Activated naive CD8-positive, alpha-beta T cell treated with anti-CD3 and anti-CD28 coated beads, Interleukin-2, amount 10 ng/mL, durations not matched to agents 7 days and 5 days (primary cell): ENCODE measurements at regions of chr3 and their contacts with region 1.

Region 1: DNA sequence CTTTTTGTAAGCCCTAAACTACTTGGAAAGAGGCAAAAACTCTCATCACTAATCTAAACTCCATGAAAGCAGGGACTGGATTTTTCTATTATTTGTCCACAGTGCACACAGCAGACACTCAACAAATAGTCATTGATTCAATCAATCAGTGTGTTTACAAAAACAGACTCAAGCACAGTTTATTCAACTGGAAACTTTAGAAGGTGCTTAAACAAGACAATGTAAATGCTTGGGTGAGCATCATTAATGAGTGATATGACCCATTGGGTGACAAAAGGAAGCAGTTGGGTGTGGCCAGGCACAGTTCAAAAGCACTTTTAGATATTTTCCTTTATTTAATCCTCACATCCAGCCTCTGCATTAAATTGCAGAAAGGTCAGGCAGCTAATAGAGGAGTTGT is 32.0 kb upstream of the PPP4R2 start:
- DNase-seq: no peak
- ATAC-seq: no peak
- H3K4me3 Mint-ChIP-seq: no peak overlapping the region
- H3K27ac Mint-ChIP-seq: no peak overlapping the region
- H3K4me1 Mint-ChIP-seq: peaks cover 21% of the 10 kb centered on the region
- H3K27me3 Mint-ChIP-seq: peaks cover 2% of the 10 kb centered on the region

Region 2: DNA sequence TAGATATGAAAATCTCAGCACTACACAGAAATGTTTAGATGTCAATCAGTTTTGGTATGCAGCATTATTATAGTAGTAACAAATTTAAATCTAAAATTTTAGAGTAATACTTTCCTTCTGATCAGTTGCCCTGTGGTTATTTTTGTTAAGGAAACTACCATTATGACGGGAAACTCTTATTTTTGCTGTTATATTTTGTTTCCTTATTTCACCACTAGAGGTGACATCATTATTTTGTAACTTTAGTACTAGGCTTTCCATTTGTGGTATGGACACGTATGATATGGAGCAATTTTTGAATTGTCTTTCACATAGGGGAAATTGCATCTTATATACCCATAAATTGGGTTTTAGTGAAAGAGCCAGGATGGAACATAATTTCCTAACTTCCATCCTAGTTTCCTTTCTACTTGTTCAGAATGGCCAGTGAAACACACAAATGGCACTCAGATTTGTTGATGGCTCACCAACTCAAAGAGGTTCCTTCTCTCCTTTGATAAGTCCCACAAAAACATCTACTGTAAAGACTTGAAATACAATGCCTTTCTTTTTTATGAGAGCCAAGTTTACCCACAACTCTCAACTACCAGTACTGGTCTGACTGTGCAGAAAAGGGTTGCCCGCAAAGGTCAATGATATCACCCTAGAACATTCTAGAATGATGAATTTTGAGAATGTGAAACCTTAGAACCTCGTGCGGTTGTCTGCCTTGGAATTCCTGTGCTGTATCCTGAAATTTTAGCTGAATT is 12.6 kb after region 1 on chr3:
- POLR2A ChIA-PET with region 1: no interaction called
- DNase-seq: no peak
- ATAC-seq: no peak
- H3K4me3 Mint-ChIP-seq: no peak overlapping the region
- H3K27ac Mint-ChIP-seq: no peak overlapping the region
- H3K4me1 Mint-ChIP-seq: peaks cover 2% of the 10 kb centered on the region
- H3K27me3 Mint-ChIP-seq: peaks cover 30% of the 10 kb centered on the region

Region 3: DNA sequence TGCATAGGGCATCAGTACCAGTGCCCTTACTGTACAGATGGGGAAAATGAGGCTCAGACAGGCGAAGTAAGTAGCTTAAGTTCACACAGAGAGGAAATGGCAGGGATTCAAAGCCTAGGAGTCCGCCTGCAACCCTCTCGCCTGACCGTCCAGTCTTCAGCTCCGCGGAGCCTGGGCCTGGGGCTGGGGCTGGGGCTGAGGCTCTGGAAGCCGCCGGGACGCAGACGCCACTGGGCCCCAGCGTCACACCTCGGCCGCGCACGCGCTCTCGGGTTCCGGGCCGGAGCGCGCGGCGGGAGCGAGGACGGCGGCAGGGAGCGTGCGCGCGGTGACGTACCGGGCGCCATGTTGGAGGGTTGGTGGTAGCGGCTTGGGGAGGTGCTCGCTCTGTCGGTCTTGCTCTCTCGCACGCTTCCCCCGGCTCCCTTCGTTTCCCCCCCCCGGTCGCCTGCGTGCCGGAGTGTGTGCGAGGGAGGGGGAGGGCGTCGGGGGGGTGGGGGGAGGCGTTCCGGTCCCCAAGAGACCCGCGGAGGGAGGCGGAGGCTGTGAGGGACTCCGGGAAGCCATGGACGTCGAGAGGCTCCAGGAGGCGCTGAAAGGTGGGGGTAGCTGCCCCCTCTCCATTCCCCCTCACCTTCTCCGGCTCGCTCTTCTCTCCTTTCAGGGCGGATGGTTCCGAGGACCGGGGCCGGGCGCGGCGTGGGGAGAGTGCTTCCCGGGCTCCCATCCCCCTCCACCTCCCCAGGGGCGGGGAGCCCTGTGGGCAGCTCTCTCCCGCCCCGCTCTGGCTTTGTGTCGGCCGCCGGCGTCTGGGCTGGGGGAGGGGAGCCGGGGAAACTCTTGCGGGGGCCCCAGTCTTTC is 32.1 kb after region 1 on chr3 and contains the start of gene PPP4R2:
- POLR2A ChIA-PET with region 1: interaction called, 12 read pairs
- DNase-seq: peak; percentile 95
- ATAC-seq: peak; percentile 87
- H3K4me3 Mint-ChIP-seq: peak within 1 kb of the TSS; percentile 95
- H3K27ac Mint-ChIP-seq: peak within 1 kb of the TSS; percentile 91
- H3K4me1 Mint-ChIP-seq: peaks cover 28% of the 10 kb centered on the region
- H3K27me3 Mint-ChIP-seq: no peaks in the 10 kb centered on the region
- total RNA-seq, gene PPP4R2: 66.3 to 72.0 TPM

Region 4: GRCh38 chr3:73070675-73071575 is 106.3 kb after region 1 on chr3:
- POLR2A ChIA-PET with region 1: no interaction called
- DNase-seq: no peak
- ATAC-seq: no peak
- H3K4me3 Mint-ChIP-seq: no peak overlapping the region
- H3K27ac Mint-ChIP-seq: no peak overlapping the region
- H3K4me1 Mint-ChIP-seq: peaks cover 33% of the 10 kb centered on the region
- H3K27me3 Mint-ChIP-seq: no peaks in the 10 kb centered on the region